ENCODE measurements at regions of chr2 and their contacts with region 1.

Region 1: GRCh38 chr2:17851731-17852585 is 26.5 kb upstream of the KCNS3 start:
- DNase-seq: peak; percentile 44 to 75
- ATAC-seq: peak; percentile 93 to 99 (median 95)
- H3K4me3 ChIP-seq: no peak overlapping the region
- H3K27ac ChIP-seq: no peak overlapping the region
- H3K4me1 ChIP-seq: no peaks in the 10 kb centered on the region
- H3K27me3 ChIP-seq: no peaks in the 10 kb centered on the region
- CTCF ChIP-seq: peak; percentile 91

Region 2: DNA sequence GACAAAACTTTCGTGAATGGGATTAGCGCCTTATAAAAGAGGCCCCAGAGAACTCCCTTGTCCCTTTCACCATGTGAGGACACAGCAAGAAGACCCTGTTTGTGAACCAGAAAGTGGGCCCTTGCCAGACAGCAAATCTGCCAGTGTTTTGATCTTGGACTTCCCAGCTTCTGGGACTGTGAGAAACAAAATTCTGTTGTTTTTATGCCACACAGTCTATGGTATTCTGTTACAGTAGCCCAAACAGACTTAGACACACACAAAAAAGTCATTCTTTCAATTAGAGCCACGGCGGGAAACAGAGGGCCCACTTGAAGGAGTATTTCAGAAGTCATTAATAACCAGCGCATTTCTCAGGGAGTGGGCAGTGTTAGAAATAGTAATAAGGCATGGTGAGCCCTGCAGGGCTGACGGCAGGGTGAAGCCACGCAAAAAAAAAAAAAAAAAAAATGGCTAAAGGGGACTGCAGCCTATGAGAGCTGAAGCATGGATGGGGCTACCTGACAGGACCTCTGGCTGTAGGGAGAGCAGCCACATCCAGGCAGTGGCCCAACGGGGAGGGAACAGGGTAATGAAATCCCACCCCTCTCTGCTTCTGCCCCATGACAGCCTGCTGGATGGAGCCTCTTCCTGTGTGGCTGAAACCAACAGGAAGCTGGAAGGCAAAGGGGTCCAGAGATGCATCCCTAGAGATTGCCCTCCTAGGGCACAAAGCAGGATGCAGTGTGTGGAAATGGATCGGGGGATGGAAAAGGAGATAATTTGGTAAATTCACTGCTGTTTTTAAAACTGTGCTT is 215.8 kb after region 1 on chr2:
- intact Hi-C with region 1: loop called in 1 of 2 experiments (anchors 5 kb)
- DNase-seq: peak in 1 of 2 donors; percentile 59
- ATAC-seq: peak in 3 of 4 donors; percentile 32 to 44 (median 44)
- H3K4me3 ChIP-seq: no peak overlapping the region
- H3K27ac ChIP-seq: no peak overlapping the region
- H3K4me1 ChIP-seq: peaks cover 11% of the 10 kb centered on the region
- H3K27me3 ChIP-seq: no peaks in the 10 kb centered on the region
- CTCF ChIP-seq: no peak

Region 3: GRCh38 chr2:18149645-18150246 is 297.8 kb after region 1 on chr2:
- intact Hi-C with region 1: loop called (anchors 5 kb)
- DNase-seq: no peak
- ATAC-seq: peak in 2 of 4 donors; percentile 52 to 78
- H3K4me3 ChIP-seq: no peak overlapping the region
- H3K27ac ChIP-seq: no peak overlapping the region
- H3K4me1 ChIP-seq: peaks cover 11% of the 10 kb centered on the region
- H3K27me3 ChIP-seq: no peaks in the 10 kb centered on the region
- CTCF ChIP-seq: peak; percentile 79

Region 4: GRCh38 chr2:18178736-18179349 is 326.9 kb after region 1 on chr2:
- intact Hi-C with region 1: loop called (anchors 1 to 5 kb)
- DNase-seq: no peak
- ATAC-seq: peak; percentile 74 to 93 (median 77)
- H3K4me3 ChIP-seq: no peak overlapping the region
- H3K27ac ChIP-seq: no peak overlapping the region
- H3K4me1 ChIP-seq: no peaks in the 10 kb centered on the region
- H3K27me3 ChIP-seq: no peaks in the 10 kb centered on the region
- CTCF ChIP-seq: peak; percentile 87

Region 5: GRCh38 chr2:18378020-18378653 is 526.2 kb after region 1 on chr2:
- intact Hi-C with region 1: loop called (anchors 5 to 10 kb)
- DNase-seq: no peak
- ATAC-seq: peak; percentile 46 to 71 (median 52)
- H3K4me3 ChIP-seq: no peak overlapping the region
- H3K27ac ChIP-seq: no peak overlapping the region
- H3K4me1 ChIP-seq: no peaks in the 10 kb centered on the region
- H3K27me3 ChIP-seq: no peaks in the 10 kb centered on the region
- CTCF ChIP-seq: peak; percentile 79